ENCODE measurements at regions of chr16 and their contacts with region 1.

Region 1: GRCh38 chr16:2487903-2488531 is 13.1 kb downstream of the TBC1D24 start:
- DNase-seq: no peak
- H3K27ac ChIP-seq: no peak overlapping the region
- CTCF ChIP-seq: no peak

Region 2: DNA sequence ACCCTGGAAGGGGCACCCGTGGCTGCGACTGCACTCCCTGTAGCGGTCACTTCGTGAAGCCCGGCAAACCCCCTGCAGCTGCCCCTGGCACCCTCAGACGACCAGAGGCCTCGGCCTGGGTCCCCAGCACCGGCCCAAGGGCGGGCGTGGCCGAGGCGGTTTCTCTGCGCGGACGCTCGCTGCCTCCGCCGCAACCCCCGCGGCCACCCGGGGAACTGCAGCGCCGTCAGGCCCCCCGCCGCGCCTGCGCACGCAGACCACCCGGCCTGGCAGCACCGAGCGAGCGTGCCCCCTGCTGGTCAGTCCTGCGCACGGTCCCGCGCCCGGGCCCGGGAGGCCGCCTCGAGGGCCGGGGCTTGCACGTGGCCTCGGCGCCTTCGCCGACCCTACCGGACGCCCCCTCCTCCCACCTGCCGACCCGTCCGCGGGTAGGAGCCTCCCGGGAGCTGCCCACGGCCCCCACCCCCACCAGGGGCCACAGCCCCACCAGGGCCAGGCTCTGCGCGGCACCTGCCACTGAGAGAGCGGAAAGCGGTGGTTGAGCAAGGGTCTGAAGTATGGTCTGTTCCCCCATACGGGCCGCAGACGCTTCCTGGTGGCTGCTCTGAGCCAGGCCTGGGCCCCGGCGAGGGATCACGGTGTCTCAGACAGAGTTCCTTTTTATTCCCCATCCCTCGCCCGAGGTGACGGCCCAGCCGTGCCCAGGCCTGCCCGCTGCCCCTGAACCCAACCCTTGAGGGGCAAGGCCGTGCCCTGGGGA is 558.3 kb before region 1 on chr16:
- CTCF ChIA-PET with region 1: no interaction called
- POLR2A ChIA-PET with region 1: no interaction called
- DNase-seq: peak; percentile 84
- H3K27ac ChIP-seq: peak overlapping the region; percentile 71
- CTCF ChIP-seq: peak; percentile 98

Region 3: GRCh38 chr16:2467521-2468151 is 20.4 kb before region 1 on chr16:
- CTCF ChIA-PET with region 1: interaction called, 3 read pairs
- POLR2A ChIA-PET with region 1: interaction called, 11 read pairs
- DNase-seq: peak; percentile 82
- H3K27ac ChIP-seq: peak overlapping the region; percentile 91
- CTCF ChIP-seq: no peak